Activated B cell treated with CpG ODN at 0.5 μM for 24 hours (primary cell): ENCODE measurements at regions of chr3 and their contacts with region 1.

Region 1: GRCh38 chr3:126021224-126021623 is 52.2 kb downstream of the ROPN1B start:
- DNase-seq: no peak
- ATAC-seq: no peak
- H3K4me3 Mint-ChIP-seq: no peak overlapping the region
- H3K27ac Mint-ChIP-seq: no peak overlapping the region
- H3K4me1 Mint-ChIP-seq: peaks cover 8% of the 10 kb centered on the region
- H3K27me3 Mint-ChIP-seq: no peaks in the 10 kb centered on the region
- CTCF ChIP-seq: no peak

Region 2: GRCh38 chr3:126835898-126836860 is 815.0 kb after region 1 on chr3:
- CTCF ChIA-PET with region 1: no interaction called
- POLR2A ChIA-PET with region 1: no interaction called
- intact Hi-C with region 1: loop called (anchors 5 kb)
- DNase-seq: no peak
- ATAC-seq: no peak
- H3K4me3 Mint-ChIP-seq: no peak overlapping the region
- H3K27ac Mint-ChIP-seq: no peak overlapping the region
- H3K4me1 Mint-ChIP-seq: no peaks in the 10 kb centered on the region
- H3K27me3 Mint-ChIP-seq: no peaks in the 10 kb centered on the region
- CTCF ChIP-seq: no peak